ENCODE measurements at regions of chr9 and their contacts with region 1.

Region 1: GRCh38 chr9:38017149-38017884 is 51.7 kb downstream of the SHB start:
- DNase-seq: peak; percentile 80 to 84
- H3K4me3 ChIP-seq: no peak overlapping the region
- H3K27ac ChIP-seq: peak overlapping the region; percentile 11 to 80 (median 72)
- H3K4me1 ChIP-seq: peaks cover 49 to 67% (median 54%) of the 10 kb centered on the region in 4 donors
- H3K27me3 ChIP-seq: no peaks in the 10 kb centered on the region
- CTCF ChIP-seq: peak in 5 of 7 experiments; percentile 33 to 78 (median 49)
- EP300 ChIP-seq: no peak
- POLR2A ChIP-seq: no peak

Region 2: DNA sequence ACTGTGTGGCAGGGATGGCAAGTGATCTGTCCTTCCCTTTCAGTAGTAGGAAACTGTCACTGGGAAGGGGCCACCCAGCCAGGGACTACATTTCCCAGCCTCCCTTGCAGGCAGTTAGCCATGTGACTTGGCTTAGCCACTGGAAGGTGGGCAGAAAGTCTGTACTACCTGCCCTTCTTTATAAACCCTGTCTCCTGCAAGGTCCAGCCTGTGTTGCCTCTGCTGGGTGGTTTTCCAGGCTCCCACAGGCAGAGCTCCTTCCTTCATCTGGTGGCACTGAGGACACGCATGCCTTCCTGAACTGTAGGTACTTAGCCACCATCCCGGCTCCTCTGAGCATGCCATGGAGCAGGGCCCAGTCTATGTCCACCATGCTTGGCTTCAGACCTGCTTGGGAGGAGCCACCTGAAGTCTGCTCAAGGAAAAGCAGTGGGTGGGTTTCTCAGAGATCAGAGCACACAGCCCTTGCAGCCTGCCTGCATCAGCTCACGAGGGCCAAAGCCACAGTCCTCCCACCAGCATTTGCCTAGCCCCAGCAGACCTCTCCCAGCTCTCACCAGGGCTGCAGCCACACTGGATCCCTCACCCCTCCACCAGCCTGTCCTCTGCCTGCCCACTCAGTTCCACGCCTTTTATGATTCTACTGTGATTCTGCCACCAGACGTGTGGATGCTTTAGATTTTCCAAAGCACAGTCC is 96.7 kb before region 1 on chr9:
- intact Hi-C with region 1: loop called (anchors 10 kb)
- DNase-seq: peak in 1 of 2 donors; percentile 56
- H3K4me3 ChIP-seq: no peak overlapping the region
- H3K27ac ChIP-seq: no peak overlapping the region
- H3K4me1 ChIP-seq: peaks cover 7 to 20% (median 15%) of the 10 kb centered on the region in 4 donors
- H3K27me3 ChIP-seq: no peaks in the 10 kb centered on the region
- CTCF ChIP-seq: no peak
- EP300 ChIP-seq: no peak
- POLR2A ChIP-seq: no peak

Region 3: DNA sequence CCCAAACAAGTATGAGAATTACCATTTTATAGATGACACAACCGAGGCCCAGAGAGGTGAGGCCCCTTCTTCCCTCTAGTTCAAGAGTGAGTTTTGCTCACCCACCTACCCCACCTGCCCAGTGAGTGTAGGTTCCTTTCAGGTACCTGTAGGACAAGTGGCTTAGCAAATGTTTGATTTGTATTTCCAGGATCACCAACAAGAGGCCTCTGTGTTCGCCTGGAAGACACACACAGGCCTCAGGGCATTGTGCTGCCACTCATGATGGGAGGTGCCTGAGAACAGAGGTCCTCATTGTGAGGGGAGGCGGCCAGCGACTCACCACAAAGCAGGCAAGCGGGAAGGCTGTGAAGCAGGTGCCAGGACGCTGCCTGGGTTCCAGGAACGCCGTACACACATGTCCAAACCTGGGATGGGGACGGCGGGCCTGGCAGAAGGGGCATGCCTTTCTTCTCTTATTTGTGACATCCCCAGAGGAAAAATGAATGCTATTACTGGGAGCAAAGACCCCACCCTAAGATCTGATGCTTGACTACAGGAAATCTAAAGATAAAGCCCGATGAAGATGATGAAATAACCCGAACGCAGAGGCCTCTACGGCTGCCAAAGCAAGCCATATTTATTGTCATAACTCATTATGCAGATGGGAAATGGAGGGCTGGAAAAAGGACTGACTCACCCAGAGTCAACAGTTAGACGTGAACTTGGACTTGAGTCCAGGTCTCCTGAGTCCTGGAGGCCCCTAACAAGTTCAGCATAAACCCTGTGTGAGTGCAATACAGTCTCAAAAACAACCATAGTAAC is 53.2 kb before region 1 on chr9:
- intact Hi-C with region 1: no loop called
- DNase-seq: peak; percentile 70 to 89
- H3K4me3 ChIP-seq: no peak overlapping the region
- H3K27ac ChIP-seq: peak overlapping the region; percentile 78 to 93 (median 86)
- H3K4me1 ChIP-seq: peaks cover 52 to 61% (median 58%) of the 10 kb centered on the region in 4 donors
- H3K27me3 ChIP-seq: no peaks in the 10 kb centered on the region
- CTCF ChIP-seq: no peak
- EP300 ChIP-seq: no peak
- POLR2A ChIP-seq: no peak

Region 4: GRCh38 chr9:38068866-38069629 is 51.7 kb after region 1 on chr9 and contains the start of gene SHB:
- intact Hi-C with region 1: loop called (anchors 10 kb)
- DNase-seq: peak; percentile 90 to 94
- H3K4me3 ChIP-seq: peak within 1 kb of the TSS; percentile 88 to 93 (median 90)
- H3K27ac ChIP-seq: peak within 1 kb of the TSS; percentile 96 to 98 (median 97)
- H3K4me1 ChIP-seq: peaks cover 25 to 63% (median 55%) of the 10 kb centered on the region in 4 donors
- H3K27me3 ChIP-seq: peaks cover 0 to 11% (median 0%) of the 10 kb centered on the region in 3 donors
- CTCF ChIP-seq: peak in 3 of 7 experiments; percentile 21 to 37 (median 24)
- EP300 ChIP-seq: no peak
- POLR2A ChIP-seq: peak in 1 of 4 donors; percentile 9
- total RNA-seq, gene SHB: 3.5 to 37.7 (median 14.8) TPM